T-cell (primary cell): ENCODE measurements at regions of chr12 and their contacts with region 1.

Region 1: DNA sequence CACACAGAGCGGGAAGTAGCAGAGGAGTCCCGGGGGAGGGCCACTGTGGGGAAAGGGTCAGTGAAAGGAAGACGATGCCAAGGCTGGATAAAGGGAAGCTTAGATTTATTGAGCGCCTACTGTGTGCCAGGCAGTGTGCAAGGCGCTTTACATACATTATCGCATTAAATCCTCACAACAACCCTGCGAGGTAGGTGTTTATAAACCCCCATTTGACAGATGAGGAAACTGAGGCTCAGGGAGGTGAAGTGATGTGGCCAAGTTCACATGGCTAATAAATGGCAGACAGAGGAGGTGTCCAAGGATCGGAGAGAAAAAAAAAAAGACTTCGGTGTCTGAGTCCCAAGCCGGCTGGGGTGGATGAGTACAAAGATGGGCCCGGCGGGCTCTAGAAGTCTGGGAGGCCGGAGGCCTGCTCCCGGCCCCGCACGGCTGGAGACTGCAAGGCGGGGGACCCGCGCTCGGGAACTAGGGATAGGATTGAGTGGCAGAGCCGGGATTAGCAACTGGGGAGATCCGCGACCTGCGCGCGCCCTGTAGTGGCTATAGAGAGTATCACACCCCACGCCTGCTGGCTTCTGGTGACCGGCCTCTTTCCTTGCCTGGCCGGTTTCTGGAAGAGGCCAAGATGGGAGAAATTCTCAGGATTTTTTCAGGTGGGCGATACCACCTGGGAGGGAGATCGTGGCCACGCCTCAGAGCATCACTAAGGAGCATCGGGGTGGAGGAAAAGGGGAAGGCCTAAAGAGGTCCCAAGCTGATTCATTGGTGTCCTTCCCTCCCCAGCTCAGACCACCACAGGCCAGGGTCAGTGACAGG is 3.9 kb downstream of the DDN start:
- DNase-seq: peak in 10 of 35 experiments; percentile 32 to 68 (median 45)
- ATAC-seq: peak in 3 of 4 experiments; percentile 19 to 35 (median 33)
- H3K4me3 ChIP-seq: no peak overlapping the region
- H3K4me3 Mint-ChIP-seq: peak overlapping the region in 2 of 3 donors; percentile 10 to 65
- H3K27ac ChIP-seq: no peak overlapping the region
- H3K27ac Mint-ChIP-seq: peak overlapping the region in 1 of 2 donors; percentile 41
- H3K4me1 ChIP-seq: peaks cover 3 to 42% of the 10 kb centered on the region in 2 experiments
- H3K4me1 Mint-ChIP-seq: peaks cover 35 to 42% (median 39%) of the 10 kb centered on the region in 3 donors
- H3K27me3 ChIP-seq: peaks cover 7 to 80% of the 10 kb centered on the region in 2 experiments
- H3K27me3 Mint-ChIP-seq: peaks cover 39 to 57% of the 10 kb centered on the region in 2 donors

Region 2: DNA sequence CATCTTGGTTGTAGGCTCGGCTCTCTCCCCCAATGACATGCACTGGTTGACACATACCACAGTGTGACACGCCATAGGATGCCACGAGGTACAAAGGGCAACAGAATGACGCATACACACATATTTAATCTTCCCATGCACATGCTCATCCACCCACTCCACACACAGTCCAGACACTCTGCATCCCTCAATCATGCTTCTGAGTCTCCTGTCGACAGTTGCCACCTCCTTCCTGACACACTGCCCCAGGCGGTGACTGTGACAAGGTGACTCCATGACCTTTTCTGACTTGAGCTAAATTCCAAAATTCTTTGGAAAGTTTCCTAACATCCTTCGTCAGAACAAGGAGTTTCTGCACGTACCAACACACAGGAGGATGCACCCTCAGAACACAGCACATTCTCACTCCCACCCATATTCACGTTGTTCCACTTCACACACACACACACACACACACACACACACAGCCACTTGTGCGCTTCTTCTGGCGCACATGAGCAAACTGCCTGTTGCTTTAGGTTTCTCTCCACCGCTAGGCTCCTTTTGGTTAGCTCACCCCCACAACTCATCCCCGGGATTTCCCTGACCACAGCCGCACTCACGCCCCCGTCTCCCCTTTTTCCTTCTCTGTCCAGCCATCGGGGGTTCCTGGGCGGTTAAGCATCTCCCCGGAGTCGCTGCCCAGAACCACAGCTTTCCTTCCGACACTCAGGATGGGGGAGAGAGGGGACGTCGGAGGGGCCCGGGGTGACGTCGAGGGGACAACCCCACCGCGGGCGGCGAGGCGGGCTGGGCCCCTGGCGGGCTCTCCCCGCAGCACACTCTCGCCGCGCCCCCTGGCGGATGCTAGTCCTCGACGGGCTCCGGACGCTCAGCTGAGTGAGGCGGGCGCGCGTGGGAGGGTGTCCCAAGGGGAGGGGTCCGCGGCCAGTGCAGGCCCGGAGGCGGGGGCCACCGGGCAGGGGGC is 17.7 kb before region 1 on chr12:
- CTCF ChIA-PET with region 1: interaction called, 6 to 10 read pairs
- POLR2A ChIA-PET with region 1: no interaction called
- DNase-seq: peak in 34 of 35 experiments; percentile 60 to 91 (median 79)
- ATAC-seq: peak; percentile 36 to 61 (median 50)
- H3K4me3 ChIP-seq: no peak overlapping the region
- H3K4me3 Mint-ChIP-seq: peak overlapping the region; percentile 34 to 86 (median 41)
- H3K27ac ChIP-seq: no peak overlapping the region
- H3K27ac Mint-ChIP-seq: peak overlapping the region in 1 of 2 donors; percentile 39
- H3K4me1 ChIP-seq: peaks cover 20 to 63% of the 10 kb centered on the region in 2 experiments
- H3K4me1 Mint-ChIP-seq: peaks cover 44 to 54% (median 54%) of the 10 kb centered on the region in 3 donors
- H3K27me3 ChIP-seq: peaks cover 10 to 60% of the 10 kb centered on the region in 2 experiments
- H3K27me3 Mint-ChIP-seq: peaks cover 26 to 33% of the 10 kb centered on the region in 2 donors

Region 3: DNA sequence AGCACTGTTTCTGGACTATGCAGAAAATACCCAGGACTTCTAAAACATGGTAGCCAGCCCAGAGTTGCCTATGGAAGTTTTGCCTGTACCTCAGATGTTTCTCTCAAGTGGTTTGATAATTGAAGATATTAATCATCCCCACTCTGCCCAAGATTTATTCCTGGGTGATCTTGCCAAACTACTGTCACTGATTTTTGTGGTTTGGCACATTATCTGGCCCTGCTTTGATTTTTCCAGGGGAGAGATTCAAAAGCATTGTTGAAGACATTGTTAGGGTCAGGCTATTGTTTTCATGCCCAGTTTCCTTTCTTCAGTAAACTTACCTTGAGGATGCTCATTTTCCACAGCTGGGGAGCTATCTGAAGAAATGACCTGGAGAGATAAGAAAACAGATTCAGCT is 17.5 kb after region 1 on chr12:
- CTCF ChIA-PET with region 1: interaction called, 7 to 10 read pairs
- POLR2A ChIA-PET with region 1: interaction called, 3 read pairs
- DNase-seq: no peak
- ATAC-seq: no peak
- H3K4me3 ChIP-seq: no peak overlapping the region
- H3K4me3 Mint-ChIP-seq: no peak overlapping the region
- H3K27ac ChIP-seq: no peak overlapping the region
- H3K27ac Mint-ChIP-seq: no peak overlapping the region
- H3K4me1 ChIP-seq: peaks cover 0 to 10% of the 10 kb centered on the region in 2 experiments
- H3K4me1 Mint-ChIP-seq: peaks cover 28 to 31% (median 29%) of the 10 kb centered on the region in 3 donors
- H3K27me3 ChIP-seq: no peaks in the 10 kb centered on the region
- H3K27me3 Mint-ChIP-seq: no peaks in the 10 kb centered on the region

Region 4: GRCh38 chr12:49018261-49019119 is 23.2 kb after region 1 on chr12 and contains the start of gene PRKAG1:
- CTCF ChIA-PET with region 1: interaction called, 4 to 22 read pairs
- POLR2A ChIA-PET with region 1: interaction called, 3 read pairs
- DNase-seq: peak; percentile 92 to 99 (median 97)
- ATAC-seq: peak; percentile 91 to 93 (median 92)
- H3K4me3 ChIP-seq: peak within 1 kb of the TSS; percentile 74 to 89
- H3K4me3 Mint-ChIP-seq: peak within 1 kb of the TSS; percentile 88 to 91 (median 90)
- H3K27ac ChIP-seq: peak within 1 kb of the TSS; percentile 94
- H3K27ac Mint-ChIP-seq: peak within 1 kb of the TSS; percentile 95 to 96
- H3K4me1 ChIP-seq: peaks cover 6 to 28% of the 10 kb centered on the region in 2 experiments
- H3K4me1 Mint-ChIP-seq: peaks cover 45 to 49% (median 45%) of the 10 kb centered on the region in 3 donors
- H3K27me3 ChIP-seq: no peaks in the 10 kb centered on the region
- H3K27me3 Mint-ChIP-seq: no peaks in the 10 kb centered on the region
- total RNA-seq, gene PRKAG1: 42.5 to 54.6 (median 48.3) TPM

Region 5: DNA sequence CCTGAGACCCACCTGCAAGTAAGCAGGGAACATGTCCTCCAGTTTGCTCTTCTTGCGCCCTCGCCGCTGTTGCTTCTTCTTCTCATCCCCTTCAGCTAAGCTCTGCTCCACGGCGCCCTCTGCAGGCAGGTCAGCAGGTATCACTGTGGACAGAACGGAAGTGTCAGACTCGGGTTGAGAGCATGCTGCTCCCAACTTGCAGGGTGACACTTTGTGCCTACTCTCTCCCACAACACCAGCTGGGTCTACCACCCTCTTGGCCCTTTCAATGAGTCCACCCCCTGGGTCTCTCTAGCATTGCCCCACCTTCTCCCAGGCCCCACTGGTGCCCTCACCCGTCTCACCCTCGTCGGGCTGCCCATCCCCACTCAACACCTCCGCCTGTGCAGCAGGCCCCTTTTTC is 48.6 kb after region 1 on chr12:
- CTCF ChIA-PET with region 1: interaction called, 4 to 16 read pairs
- POLR2A ChIA-PET with region 1: no interaction called
- DNase-seq: peak; percentile 58 to 89 (median 77)
- ATAC-seq: peak; percentile 77 to 89 (median 84)
- H3K4me3 ChIP-seq: no peak overlapping the region
- H3K4me3 Mint-ChIP-seq: no peak overlapping the region
- H3K27ac ChIP-seq: peak overlapping the region; percentile 7
- H3K27ac Mint-ChIP-seq: peak overlapping the region; percentile 36 to 45
- H3K4me1 ChIP-seq: peaks cover 0 to 9% of the 10 kb centered on the region in 2 experiments
- H3K4me1 Mint-ChIP-seq: peaks cover 4 to 13% (median 8%) of the 10 kb centered on the region in 3 donors
- H3K27me3 ChIP-seq: no peaks in the 10 kb centered on the region
- H3K27me3 Mint-ChIP-seq: no peaks in the 10 kb centered on the region

Region 6: DNA sequence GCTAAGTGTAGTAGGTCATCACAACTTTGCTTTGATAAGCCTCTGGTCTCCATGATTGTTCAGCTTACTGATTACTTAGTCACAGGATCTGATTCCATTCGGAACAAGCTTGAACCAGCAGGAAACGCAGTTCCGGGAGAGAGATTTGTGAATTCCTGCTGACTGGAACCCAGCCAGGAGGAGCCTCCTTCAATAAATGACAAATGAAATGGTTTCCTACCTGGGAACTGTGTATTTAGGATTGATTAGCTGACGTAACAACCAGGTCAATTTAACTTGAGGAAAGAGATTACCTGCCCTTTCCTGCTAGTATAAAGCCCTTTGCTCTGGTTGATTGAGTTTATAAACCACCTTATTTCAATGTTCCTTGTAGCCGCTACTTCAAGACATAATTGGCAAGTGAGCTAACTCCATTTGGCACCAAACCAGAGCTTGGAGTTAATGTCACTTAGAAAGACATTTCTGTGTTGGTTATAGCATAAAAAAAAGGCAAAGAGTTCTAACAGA is 508.5 kb after region 1 on chr12:
- CTCF ChIA-PET with region 1: no interaction called
- POLR2A ChIA-PET with region 1: no interaction called
- DNase-seq: no peak
- ATAC-seq: no peak
- H3K4me3 ChIP-seq: no peak overlapping the region
- H3K4me3 Mint-ChIP-seq: no peak overlapping the region
- H3K27ac ChIP-seq: no peak overlapping the region
- H3K27ac Mint-ChIP-seq: no peak overlapping the region
- H3K4me1 ChIP-seq: peaks cover 2 to 4% of the 10 kb centered on the region in 2 experiments
- H3K4me1 Mint-ChIP-seq: peaks cover 8 to 18% (median 16%) of the 10 kb centered on the region in 3 donors
- H3K27me3 ChIP-seq: no peaks in the 10 kb centered on the region
- H3K27me3 Mint-ChIP-seq: no peaks in the 10 kb centered on the region

Region 7: DNA sequence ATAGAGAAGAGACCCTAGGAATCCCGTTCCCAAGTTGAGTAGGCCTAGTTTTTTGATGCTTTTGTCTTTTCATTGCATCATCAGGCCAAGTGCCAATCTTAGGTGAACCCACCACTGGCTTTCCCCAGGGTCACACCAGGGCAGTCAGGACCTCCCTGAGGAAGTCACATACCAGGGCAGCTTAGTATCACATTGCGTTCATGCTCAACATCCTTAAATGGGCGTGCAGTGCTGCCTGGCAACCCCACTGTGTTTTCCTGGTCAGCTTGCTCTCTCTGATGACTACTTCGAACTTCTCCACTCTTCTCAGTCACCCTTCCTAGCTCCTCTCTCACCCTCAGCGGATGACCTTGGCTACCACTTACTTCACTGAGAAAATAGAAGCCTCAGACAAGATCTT is 1071.2 kb after region 1 on chr12:
- CTCF ChIA-PET with region 1: no interaction called
- POLR2A ChIA-PET with region 1: no interaction called
- DNase-seq: no peak
- ATAC-seq: no peak
- H3K4me3 ChIP-seq: no peak overlapping the region
- H3K4me3 Mint-ChIP-seq: no peak overlapping the region
- H3K27ac ChIP-seq: no peak overlapping the region
- H3K27ac Mint-ChIP-seq: no peak overlapping the region
- H3K4me1 ChIP-seq: peaks cover 0 to 7% of the 10 kb centered on the region in 2 experiments
- H3K4me1 Mint-ChIP-seq: peaks cover 7 to 13% (median 8%) of the 10 kb centered on the region in 3 donors
- H3K27me3 ChIP-seq: peaks cover 0 to 23% of the 10 kb centered on the region in 2 experiments
- H3K27me3 Mint-ChIP-seq: peaks cover 4 to 16% of the 10 kb centered on the region in 2 donors